CD4-positive, alpha-beta T cell (primary cell): ENCODE measurements at regions of chr7 and their contacts with region 1.

Region 1: DNA sequence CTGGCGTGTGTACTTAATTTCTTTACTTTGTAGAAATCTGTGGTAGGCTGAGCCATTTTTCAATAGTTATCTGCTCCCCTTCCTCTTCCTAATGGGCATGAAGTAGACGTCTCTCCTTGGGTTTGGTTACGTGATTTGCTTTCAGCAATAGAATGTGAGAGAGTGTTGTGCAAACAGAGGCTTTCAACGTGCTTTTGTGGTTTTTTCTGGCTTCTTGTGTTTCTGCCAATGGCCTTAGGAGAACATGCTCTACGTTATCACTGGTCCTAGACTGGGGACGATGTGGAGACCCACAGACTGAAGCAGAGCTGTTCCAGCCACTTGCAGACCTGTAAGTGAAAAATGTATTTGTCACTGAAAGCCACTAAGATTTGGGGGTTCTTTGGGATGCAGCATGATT is 107.2 kb upstream of the NPTX2 start:
- DNase-seq: no peak
- ATAC-seq: no peak
- H3K4me3 ChIP-seq: no peak overlapping the region
- H3K4me3 Mint-ChIP-seq: no peak overlapping the region
- H3K27ac ChIP-seq: no peak overlapping the region
- H3K27ac Mint-ChIP-seq: no peak overlapping the region
- H3K4me1 ChIP-seq: no peaks in the 10 kb centered on the region
- H3K4me1 Mint-ChIP-seq: no peaks in the 10 kb centered on the region
- H3K27me3 ChIP-seq: peaks cover 0 to 2% of the 10 kb centered on the region in 2 experiments
- H3K27me3 Mint-ChIP-seq: no peaks in the 10 kb centered on the region
- CTCF ChIP-seq: no peak

Region 2: DNA sequence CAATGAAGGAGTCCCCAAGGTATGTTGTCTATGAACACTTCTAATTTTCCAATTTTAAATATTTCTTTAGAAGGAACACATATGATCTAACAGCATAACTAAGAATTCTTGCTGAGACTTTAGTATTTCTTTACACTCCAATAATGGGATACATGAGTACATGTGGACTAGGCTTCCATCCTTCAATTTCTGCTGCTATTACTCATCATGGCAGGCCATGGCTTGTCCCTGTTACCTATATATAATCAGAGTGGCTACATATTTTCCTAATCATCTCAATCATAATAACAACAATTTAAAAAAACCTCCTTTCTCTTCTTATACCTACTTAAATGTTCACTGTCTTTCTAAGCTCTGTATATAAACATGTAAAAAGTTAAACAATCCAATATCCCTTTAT is 838.3 kb before region 1 on chr7:
- CTCF ChIA-PET with region 1: no interaction called
- POLR2A ChIA-PET with region 1: no interaction called
- intact Hi-C with region 1: loop called in 1 of 2 experiments (anchors 5 kb)
- DNase-seq: no peak
- ATAC-seq: no peak
- H3K4me3 ChIP-seq: no peak overlapping the region
- H3K4me3 Mint-ChIP-seq: no peak overlapping the region
- H3K27ac ChIP-seq: no peak overlapping the region
- H3K27ac Mint-ChIP-seq: no peak overlapping the region
- H3K4me1 ChIP-seq: no peaks in the 10 kb centered on the region
- H3K4me1 Mint-ChIP-seq: no peaks in the 10 kb centered on the region
- H3K27me3 ChIP-seq: no peaks in the 10 kb centered on the region
- H3K27me3 Mint-ChIP-seq: peaks cover 15% of the 10 kb centered on the region
- CTCF ChIP-seq: no peak

Region 3: GRCh38 chr7:97851683-97852082 is 658.2 kb before region 1 on chr7:
- CTCF ChIA-PET with region 1: no interaction called
- POLR2A ChIA-PET with region 1: no interaction called
- intact Hi-C with region 1: no loop called
- DNase-seq: no peak
- ATAC-seq: no peak
- H3K4me3 ChIP-seq: no peak overlapping the region
- H3K4me3 Mint-ChIP-seq: no peak overlapping the region
- H3K27ac ChIP-seq: no peak overlapping the region
- H3K27ac Mint-ChIP-seq: no peak overlapping the region
- H3K4me1 ChIP-seq: no peaks in the 10 kb centered on the region
- H3K4me1 Mint-ChIP-seq: no peaks in the 10 kb centered on the region
- H3K27me3 ChIP-seq: no peaks in the 10 kb centered on the region
- H3K27me3 Mint-ChIP-seq: no peaks in the 10 kb centered on the region
- CTCF ChIP-seq: no peak